GM10248 (cell line): ENCODE measurements at regions of chr7 and their contacts with region 1.

Region 1: GRCh38 chr7:44240983-44241510 is 40.3 kb downstream of the YKT6 start:
- DNase-seq: peak; percentile 90
- CTCF ChIP-seq: peak; percentile 86

Region 2: GRCh38 chr7:44072364-44073231 is 168.4 kb before region 1 on chr7:
- CTCF ChIA-PET with region 1: no interaction called
- POLR2A ChIA-PET with region 1: no interaction called
- DNase-seq: peak; percentile 60
- CTCF ChIP-seq: peak; percentile 64

Region 3: DNA sequence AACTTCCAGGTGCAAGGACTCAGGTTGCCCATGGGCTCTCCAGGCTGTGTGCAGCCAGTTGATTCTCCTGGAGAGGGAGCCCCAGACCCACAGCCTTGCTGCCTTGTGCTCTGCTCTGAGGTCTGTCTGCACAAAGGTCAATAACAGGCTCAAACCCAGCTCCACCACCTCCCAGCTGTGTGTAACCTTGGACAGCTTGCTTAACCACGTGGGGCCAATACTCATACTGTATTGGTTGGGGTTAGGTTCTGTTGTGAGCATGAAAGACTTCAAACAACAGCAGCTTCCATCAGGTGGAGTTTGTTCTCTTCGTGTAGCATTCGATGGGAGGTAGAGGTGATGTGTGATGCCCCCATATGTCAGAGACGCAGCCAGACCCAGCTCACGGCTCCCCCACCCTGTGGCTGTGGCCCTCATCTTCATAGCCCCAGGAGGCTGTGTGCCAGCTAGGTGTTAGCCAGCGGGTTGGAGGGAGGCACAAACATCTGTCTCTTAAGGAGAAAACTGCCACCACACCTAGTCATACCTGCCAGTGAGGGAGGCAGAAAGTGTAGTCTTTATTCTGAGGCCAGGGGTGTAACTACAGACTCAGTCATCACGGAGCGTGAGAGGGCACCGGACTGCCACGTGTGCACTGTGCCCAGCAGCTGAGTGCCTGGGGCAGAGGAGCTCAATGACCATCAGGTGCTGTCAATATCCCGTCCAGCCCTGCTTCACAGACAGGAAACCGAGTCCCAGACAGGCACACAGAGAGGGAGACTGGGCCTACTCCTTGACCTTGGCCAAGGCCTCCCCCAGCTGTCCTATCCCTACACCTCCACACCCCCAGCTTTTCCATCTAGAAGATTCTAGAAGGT is 109.6 kb before region 1 on chr7:
- CTCF ChIA-PET with region 1: no interaction called
- POLR2A ChIA-PET with region 1: no interaction called
- DNase-seq: no peak
- CTCF ChIP-seq: no peak

Region 4: DNA sequence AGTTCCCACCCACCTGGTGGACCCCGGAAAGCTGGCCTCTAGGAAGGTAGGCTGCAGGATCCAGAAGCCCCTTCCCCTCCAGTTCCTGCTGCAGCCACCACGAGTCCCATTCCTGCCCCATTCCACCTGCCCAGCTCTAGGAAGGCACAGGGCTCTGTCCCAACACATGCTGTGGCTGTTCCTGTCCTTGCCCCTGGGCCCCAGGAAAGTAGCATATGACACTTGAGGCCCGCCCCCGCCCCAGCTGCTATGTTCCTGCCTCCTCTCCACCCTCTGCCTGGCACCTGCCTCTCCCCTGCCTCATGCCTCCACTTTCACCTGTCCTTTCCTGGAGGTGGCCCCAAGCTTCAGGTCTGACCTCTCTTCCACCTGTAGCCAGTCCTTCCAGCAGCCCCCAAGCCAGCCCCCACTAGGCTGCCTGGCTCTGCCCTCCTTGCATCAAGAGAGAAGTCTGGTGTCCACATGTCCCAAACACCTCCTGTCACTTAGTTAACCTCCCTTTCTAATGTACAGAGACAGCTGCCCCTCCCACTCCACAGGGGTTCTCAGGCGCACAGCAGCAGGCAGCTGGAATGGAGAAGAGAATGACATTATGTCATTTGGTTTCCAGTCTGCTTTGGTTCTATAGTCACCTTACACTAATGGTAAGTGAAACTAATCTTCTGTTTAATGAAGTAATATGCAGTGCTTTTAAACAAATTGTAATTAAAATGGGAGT is 17.5 kb before region 1 on chr7:
- CTCF ChIA-PET with region 1: interaction called, 10 read pairs
- POLR2A ChIA-PET with region 1: no interaction called
- DNase-seq: no peak
- CTCF ChIP-seq: no peak

Region 5: GRCh38 chr7:44257618-44258422 is 16.8 kb after region 1 on chr7:
- CTCF ChIA-PET with region 1: interaction called, 117 read pairs
- POLR2A ChIA-PET with region 1: no interaction called
- DNase-seq: peak; percentile 89
- CTCF ChIP-seq: peak; percentile 8

Region 6: DNA sequence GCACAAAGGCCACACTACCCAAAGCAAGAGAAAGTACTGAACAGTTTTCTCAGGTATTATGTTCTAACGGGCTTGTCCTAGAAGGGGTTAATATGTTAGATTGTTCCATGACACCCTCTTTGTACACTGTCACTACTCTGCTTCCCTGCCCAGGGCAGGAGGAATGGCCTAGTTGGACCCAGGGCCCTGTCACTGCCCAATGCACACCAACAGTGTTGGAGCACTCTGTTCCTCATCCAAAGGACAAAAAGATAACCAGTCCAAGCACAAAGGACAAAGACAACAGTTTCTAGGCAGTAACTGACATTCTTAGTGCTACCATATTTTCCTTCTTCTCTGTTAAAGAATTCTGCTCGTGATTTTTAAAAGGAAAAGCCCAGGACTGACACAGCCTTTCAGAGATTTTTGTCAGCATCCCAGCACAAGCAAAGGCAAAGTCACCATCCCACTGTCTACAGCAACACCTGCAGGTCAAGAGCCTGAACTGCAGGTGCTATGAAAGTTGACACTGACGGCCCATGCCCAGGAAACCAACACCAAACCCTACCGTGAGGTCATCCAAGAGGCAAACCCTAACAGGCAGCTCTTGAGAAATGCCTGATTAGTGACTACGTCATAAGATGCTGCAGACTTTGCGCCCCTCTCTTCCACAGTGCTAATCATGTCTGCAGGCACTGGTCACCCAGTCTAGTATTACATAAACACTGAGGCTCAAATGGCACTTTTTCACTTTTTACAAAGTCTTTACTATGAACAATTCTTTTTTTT is 236.2 kb after region 1 on chr7:
- CTCF ChIA-PET with region 1: interaction called, 26 read pairs
- POLR2A ChIA-PET with region 1: no interaction called
- DNase-seq: peak; percentile 69
- CTCF ChIP-seq: peak; percentile 93

Region 7: GRCh38 chr7:44490351-44491200 is 249.5 kb after region 1 on chr7 and contains the start of gene NUDCD3:
- CTCF ChIA-PET with region 1: interaction called, 10 read pairs
- POLR2A ChIA-PET with region 1: no interaction called
- DNase-seq: peak; percentile 92
- CTCF ChIP-seq: peak; percentile 2

Region 8: GRCh38 chr7:44534501-44534900 is 293.5 kb after region 1 on chr7:
- CTCF ChIA-PET with region 1: interaction called, 16 read pairs
- POLR2A ChIA-PET with region 1: no interaction called
- DNase-seq: peak; percentile 86
- CTCF ChIP-seq: peak; percentile 44

Region 9: DNA sequence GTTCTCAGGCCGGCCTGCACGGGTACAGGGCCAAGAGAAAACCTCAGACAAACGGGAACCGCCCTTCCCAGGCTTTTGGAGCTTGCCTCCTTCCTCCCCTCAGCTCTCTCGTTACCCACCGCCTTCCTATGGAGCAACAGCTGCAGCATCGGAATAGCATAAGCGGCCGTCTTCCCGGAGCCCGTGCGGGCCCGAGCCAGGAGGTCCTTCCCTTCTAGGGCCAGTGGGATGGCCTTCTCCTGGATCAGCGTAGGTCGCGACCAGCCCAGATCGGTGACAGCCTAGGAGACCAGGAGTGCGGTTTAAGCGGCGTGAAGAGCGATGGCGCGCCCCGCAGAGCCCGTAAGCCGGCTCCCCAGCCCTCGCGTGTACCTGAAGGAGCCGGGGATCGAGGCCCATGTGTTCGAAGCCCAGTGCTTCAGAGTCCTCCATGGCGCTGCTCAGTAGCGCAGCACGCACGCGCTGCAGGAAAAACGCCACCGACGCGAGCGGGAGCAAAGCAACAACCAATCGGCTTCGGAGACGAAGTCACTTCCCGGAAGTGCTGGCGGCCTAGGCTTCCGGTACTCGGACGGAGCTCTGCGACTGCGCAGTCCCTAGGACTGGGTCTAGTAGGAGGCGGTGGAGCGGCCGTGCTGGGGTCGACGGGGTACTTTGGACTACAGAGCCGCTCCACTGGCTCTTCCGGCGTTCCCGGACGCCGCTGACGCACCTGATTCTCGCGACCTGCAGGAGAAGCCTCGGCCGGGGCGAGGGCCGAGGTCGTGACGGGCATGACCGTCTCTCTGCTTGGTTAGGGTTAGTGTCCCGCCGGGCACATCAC is 332.6 kb after region 1 on chr7 and contains the start of gene DDX56:
- CTCF ChIA-PET with region 1: interaction called, 65 read pairs
- POLR2A ChIA-PET with region 1: no interaction called
- DNase-seq: peak; percentile 96
- CTCF ChIP-seq: no peak